ENCODE measurements at regions of chr5 and their contacts with region 1.

Region 1: GRCh38 chr5:43729846-43730478 is 127.0 kb downstream of the NNT start:
- DNase-seq: peak; percentile 51
- ATAC-seq: peak; percentile 62
- H3K4me3 ChIP-seq: no peak overlapping the region
- H3K27ac ChIP-seq: no peak overlapping the region
- H3K4me1 ChIP-seq: peaks cover 1% of the 10 kb centered on the region; the same call in 1 of the 2 replicates
- H3K27me3 ChIP-seq: no peaks in the 10 kb centered on the region
- CTCF ChIP-seq: peak; percentile 69
- POLR2A ChIP-seq: no peak
- RAD21 ChIP-seq: peak; percentile 72

Region 2: GRCh38 chr5:43631182-43631910 is 98.6 kb before region 1 on chr5:
- CTCF ChIA-PET with region 1: interaction called, 5 read pairs
- POLR2A ChIA-PET with region 1: no interaction called
- dilution Hi-C with region 1: no loop called
- in situ Hi-C with region 1: no loop called
- intact Hi-C with region 1: loop called (anchors 5 kb)
- DNase-seq: peak; percentile 87
- ATAC-seq: peak; percentile 96
- H3K4me3 ChIP-seq: no peak overlapping the region
- H3K27ac ChIP-seq: no peak overlapping the region
- H3K4me1 ChIP-seq: peaks cover 3% of the 10 kb centered on the region; the same call in 1 of the 2 replicates
- H3K27me3 ChIP-seq: no peaks in the 10 kb centered on the region
- CTCF ChIP-seq: peak; percentile 83
- POLR2A ChIP-seq: no peak
- RAD21 ChIP-seq: peak; percentile 83

Region 3: GRCh38 chr5:43661102-43661501 is 68.9 kb before region 1 on chr5:
- CTCF ChIA-PET with region 1: no interaction called
- POLR2A ChIA-PET with region 1: no interaction called
- dilution Hi-C with region 1: no loop called
- in situ Hi-C with region 1: no loop called
- intact Hi-C with region 1: loop called (anchors 5 kb)
- DNase-seq: peak; percentile 59
- ATAC-seq: no peak
- H3K4me3 ChIP-seq: no peak overlapping the region
- H3K27ac ChIP-seq: no peak overlapping the region
- H3K4me1 ChIP-seq: peaks cover 2% of the 10 kb centered on the region; the same call in 1 of the 2 replicates
- H3K27me3 ChIP-seq: no peaks in the 10 kb centered on the region
- CTCF ChIP-seq: peak; percentile 58
- POLR2A ChIP-seq: no peak
- RAD21 ChIP-seq: peak; percentile 52

Region 4: DNA sequence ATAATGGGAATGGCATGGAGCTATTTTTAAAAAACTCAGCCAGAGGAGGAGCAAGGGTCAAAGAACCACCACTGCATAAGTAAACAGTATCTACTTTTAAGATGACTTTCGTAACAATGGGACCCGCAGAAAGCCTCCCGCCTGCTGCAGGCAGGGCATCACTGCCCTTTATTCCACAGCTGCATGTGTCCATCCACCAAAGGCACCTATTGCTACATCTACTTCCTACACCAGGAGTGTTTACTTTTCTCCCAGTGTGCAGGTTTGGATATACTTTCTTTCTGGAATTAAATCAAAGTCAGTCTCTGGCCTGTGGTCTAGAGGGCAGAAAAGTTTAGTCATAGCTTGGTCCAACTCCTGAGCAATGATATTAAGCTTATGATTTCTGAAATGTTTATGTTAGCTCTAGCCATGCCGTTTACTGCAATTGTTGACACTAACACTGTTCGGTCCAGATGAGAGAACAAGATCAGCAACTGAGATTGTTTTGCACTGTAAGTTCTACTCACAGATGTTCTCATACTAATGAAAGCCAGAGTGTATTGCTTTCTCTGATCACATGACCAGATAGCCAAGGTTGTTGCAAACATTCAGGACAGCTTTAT is 267.8 kb after region 1 on chr5:
- CTCF ChIA-PET with region 1: interaction called, 3 read pairs
- POLR2A ChIA-PET with region 1: no interaction called
- dilution Hi-C with region 1: no loop called
- in situ Hi-C with region 1: no loop called
- intact Hi-C with region 1: loop called (anchors 5 kb)
- DNase-seq: peak; percentile 70
- ATAC-seq: peak; percentile 83
- H3K4me3 ChIP-seq: no peak overlapping the region
- H3K27ac ChIP-seq: peak overlapping the region; percentile 48; the same call in 1 of the 2 replicates
- H3K4me1 ChIP-seq: peaks cover 10% of the 10 kb centered on the region; the same call in 1 of the 2 replicates
- H3K27me3 ChIP-seq: no peaks in the 10 kb centered on the region
- CTCF ChIP-seq: no peak
- POLR2A ChIP-seq: no peak
- RAD21 ChIP-seq: no peak

Region 5: DNA sequence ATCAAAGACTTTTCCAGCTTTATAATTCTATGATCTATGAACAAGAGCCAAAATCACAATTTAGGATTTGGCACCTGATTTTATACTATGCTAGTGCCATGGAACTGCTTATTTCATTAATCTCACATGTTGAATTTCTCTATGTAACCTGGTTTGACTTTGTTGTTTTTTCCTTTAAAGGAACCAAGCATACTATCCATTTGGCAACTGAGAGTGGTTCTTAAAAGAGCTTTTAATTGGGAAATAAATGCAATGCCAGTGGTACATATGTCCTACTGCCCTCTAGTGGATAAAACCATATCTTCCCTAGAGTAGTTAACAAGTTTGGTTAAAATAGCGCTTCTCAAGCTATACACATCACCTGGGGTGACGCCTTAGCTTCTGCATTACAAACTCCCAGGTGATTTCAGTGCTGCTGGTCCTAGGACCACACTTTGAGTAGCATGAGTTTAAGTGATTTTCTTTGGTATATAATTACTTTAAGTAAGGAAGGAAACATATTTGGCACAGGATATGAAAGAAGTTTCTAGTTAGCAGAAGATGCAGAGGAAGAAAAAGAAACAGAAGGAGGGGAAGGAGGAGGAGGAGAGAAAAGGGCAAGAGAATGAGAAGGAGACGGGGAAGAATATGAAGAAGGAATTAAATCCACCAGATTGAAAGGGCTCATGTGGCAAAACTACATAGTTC is 602.5 kb after region 1 on chr5:
- CTCF ChIA-PET with region 1: interaction called, 16 read pairs
- POLR2A ChIA-PET with region 1: no interaction called
- dilution Hi-C with region 1: no loop called
- in situ Hi-C with region 1: loop called (anchors 5 kb)
- intact Hi-C with region 1: loop called (anchors 1 kb)
- DNase-seq: peak; percentile 52
- ATAC-seq: peak; percentile 66; the same call in 1 of the 2 replicates
- H3K4me3 ChIP-seq: no peak overlapping the region
- H3K27ac ChIP-seq: no peak overlapping the region
- H3K4me1 ChIP-seq: no peaks in the 10 kb centered on the region
- H3K27me3 ChIP-seq: no peaks in the 10 kb centered on the region
- CTCF ChIP-seq: peak; percentile 70
- POLR2A ChIP-seq: no peak
- RAD21 ChIP-seq: peak; percentile 70

Region 6: GRCh38 chr5:44797841-44798240 is 1067.9 kb after region 1 on chr5:
- CTCF ChIA-PET with region 1: no interaction called
- POLR2A ChIA-PET with region 1: no interaction called
- dilution Hi-C with region 1: no loop called
- in situ Hi-C with region 1: loop called (anchors 25 kb)
- intact Hi-C with region 1: no loop called
- DNase-seq: no peak
- ATAC-seq: no peak
- H3K4me3 ChIP-seq: no peak overlapping the region
- H3K27ac ChIP-seq: no peak overlapping the region
- H3K4me1 ChIP-seq: no peaks in the 10 kb centered on the region
- H3K27me3 ChIP-seq: no peaks in the 10 kb centered on the region
- CTCF ChIP-seq: no peak
- POLR2A ChIP-seq: no peak
- RAD21 ChIP-seq: no peak